AG04449 (cell line): ENCODE measurements at regions of chr21 and their contacts with region 1.

Region 1: GRCh38 chr21:36478207-36478701 is 1.7 kb downstream of the CLDN14 start:
- DNase-seq: peak; percentile 72
- H3K4me3 ChIP-seq: peak overlapping the region; percentile 20
- CTCF ChIP-seq: no peak

Region 2: GRCh38 chr21:36429947-36430546 is 48.2 kb before region 1 on chr21:
- CTCF ChIA-PET with region 1: interaction called, 3 read pairs
- POLR2A ChIA-PET with region 1: interaction called, 33 read pairs
- DNase-seq: peak; percentile 91
- H3K4me3 ChIP-seq: peak overlapping the region; percentile 43
- CTCF ChIP-seq: peak; percentile 18

Region 3: GRCh38 chr21:36437745-36438128 is 40.5 kb before region 1 on chr21:
- CTCF ChIA-PET with region 1: interaction called, 3 read pairs
- POLR2A ChIA-PET with region 1: interaction called, 10 read pairs
- DNase-seq: peak; percentile 54
- H3K4me3 ChIP-seq: no peak overlapping the region
- CTCF ChIP-seq: no peak

Region 4: DNA sequence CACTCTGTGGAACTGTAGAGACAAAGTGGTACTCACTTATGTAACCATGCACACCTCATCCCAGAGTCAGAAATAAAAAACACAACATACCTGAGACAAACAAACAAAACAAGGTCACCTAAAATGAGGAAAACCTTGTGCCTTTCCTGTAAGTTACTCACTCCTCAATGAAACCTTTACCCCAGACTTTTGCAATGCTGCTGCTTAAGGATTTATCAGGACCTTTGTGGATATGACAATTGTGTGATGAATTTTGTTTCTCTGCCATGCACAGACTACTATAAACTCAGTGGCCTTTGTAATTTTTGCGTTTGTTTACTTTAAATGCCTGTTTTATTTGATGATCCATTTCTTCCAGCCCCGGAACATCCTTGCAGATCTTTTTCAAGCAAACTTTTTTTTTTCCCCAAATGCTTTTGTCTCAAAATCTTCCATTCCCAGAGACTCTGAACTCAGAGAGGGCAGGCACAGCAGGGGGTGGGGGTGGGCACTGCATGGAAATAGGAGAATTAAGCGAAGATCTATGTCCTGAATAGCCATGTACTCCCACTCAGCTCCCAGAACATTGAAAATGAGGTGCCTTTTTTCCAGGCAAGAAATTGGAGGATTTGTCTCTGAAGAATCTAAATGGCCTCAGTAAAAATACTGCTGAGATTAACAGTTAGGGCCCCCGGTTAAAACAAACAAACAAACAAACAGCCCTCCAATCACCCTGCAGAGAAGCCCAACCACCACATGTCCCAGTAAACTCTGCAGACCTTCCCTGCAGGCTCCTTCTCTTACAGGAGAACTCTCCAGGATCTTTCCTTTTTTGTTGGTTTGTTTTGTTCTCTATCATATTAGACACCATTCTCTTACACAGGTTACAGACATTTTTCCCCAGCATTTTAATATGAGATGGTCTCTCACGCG is 198.0 kb after region 1 on chr21:
- CTCF ChIA-PET with region 1: no interaction called
- POLR2A ChIA-PET with region 1: no interaction called
- DNase-seq: no peak
- H3K4me3 ChIP-seq: no peak overlapping the region
- CTCF ChIP-seq: no peak

Region 5: DNA sequence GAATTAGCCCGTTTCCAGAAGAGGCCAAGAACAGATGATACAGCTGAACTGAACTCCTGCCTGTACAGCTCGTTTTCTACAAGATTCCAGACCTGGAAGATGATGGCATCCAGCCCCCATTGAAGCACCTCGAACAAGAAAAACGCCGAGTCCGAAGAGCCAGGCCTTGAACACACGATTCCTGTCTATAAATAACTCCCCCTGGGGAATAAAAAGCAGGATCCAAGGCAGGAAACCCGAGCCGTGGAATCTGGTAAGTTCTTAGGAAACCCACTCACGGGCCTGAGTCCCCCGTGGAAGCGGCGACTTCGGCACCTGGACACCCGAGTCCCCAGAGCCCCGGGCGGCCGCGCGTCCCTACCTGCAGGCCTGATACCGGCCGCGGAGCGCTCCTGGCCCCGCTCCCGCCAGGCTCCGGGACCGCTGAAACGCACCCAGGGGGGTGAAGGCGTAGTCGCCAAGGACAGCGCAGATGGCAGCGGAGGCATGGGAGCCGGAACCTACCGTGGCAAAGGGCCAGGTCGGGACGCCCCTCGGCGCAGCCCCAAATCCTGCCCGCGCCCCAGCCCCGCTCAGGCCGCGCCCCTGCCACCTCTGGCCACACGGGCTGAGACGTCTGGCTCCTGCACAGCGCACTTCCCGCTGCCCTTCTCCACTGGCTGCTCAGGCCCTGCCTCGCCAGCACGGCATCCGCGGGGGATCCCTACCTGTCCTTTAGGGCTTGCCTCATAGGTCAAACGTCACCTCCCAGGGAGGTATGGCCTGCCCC is 502.2 kb after region 1 on chr21:
- CTCF ChIA-PET with region 1: no interaction called
- POLR2A ChIA-PET with region 1: no interaction called
- DNase-seq: no peak
- H3K4me3 ChIP-seq: peak overlapping the region; percentile 44
- CTCF ChIP-seq: no peak